Activated naive CD8-positive, alpha-beta T cell treated with anti-CD3 and anti-CD28 coated beads, Interleukin-2, amount 10 ng/mL, durations not matched to agents 7 days and 5 days (primary cell): ENCODE measurements at regions of chr15 and their contacts with region 1.

Region 1: DNA sequence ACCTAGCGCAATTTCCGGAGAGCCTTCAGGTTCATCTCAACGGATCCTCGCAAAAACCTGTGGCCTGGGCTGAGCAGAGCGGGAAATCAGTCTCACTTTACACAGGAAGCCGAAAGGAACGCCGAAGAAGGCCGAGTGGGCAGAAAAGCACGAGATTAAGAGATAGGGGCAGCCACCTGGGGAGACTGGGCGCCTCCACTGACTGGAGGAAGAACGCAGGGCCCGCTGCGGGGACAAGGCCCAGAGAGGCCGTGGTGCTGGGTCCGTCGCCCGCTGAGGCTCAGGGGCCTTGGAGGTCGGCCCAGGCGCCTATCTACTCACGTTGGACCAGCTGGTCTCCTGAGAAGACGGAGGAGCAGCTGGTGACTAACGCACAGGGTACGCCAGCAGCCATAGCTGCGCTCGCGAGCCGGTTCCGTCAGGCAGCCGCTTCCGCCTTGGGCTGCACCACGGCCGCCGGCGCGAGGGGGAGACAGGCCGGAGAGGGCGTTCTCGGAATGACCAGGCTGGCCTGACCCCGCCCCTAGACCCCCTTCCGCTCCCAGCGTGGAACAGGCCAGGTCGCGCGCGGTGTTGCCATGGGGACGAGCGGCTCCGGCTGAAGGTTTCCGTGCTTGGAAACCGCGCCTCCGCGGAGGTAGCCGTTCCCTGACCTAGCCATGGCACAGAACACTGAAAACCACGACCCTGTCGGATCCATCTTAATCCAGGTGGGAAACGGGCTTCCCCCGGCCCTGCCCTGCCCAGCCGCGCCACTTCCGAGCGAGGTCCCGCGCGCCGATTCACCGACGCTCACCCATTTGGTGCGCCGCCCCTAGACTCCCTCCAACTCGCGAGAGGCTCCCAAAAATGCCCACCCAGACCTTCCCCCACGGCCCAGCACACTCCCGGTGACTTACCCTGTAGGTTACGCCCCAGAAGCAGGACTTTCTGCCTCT is at the starts of genes AAGAB and IQCH:
- DNase-seq: peak; percentile 100
- ATAC-seq: peak; percentile 97
- H3K4me3 Mint-ChIP-seq: peak within 1 kb of the TSS; percentile 98
- H3K27ac Mint-ChIP-seq: peak within 1 kb of the TSS; percentile 98
- H3K4me1 Mint-ChIP-seq: peaks cover 23% of the 10 kb centered on the region
- H3K27me3 Mint-ChIP-seq: peaks cover 10% of the 10 kb centered on the region
- total RNA-seq, gene AAGAB: 39.3 to 40.4 TPM
- total RNA-seq, gene IQCH: 1.2 to 2.2 TPM

Region 2: GRCh38 chr15:67240235-67241131 is 14.0 kb before region 1 on chr15:
- POLR2A ChIA-PET with region 1: interaction called, 14 read pairs
- DNase-seq: no peak
- ATAC-seq: no peak
- H3K4me3 Mint-ChIP-seq: peak overlapping the region; percentile 33
- H3K27ac Mint-ChIP-seq: peak overlapping the region; percentile 67
- H3K4me1 Mint-ChIP-seq: peaks cover 36% of the 10 kb centered on the region
- H3K27me3 Mint-ChIP-seq: no peaks in the 10 kb centered on the region